Activated T-helper 2 cell treated with anti-CD3 and anti-CD28 coated beads, Interferon-gamma antibody, Interleukin-2, Interleukin-4, amounts not matched to agents 10 μg/mL and 5 μg/mL and 100 μg/mL, durations not matched to agents 14 hours and 24 hours and 36 hours (primary cell): ENCODE measurements at regions of chr17 and their contacts with region 1.

Region 1: GRCh38 chr17:15999439-16000350 is at the starts of genes TTC19 and ZSWIM7:
- DNase-seq: peak; percentile 92
- H3K4me3 Mint-ChIP-seq: peak within 1 kb of the TSS; percentile 94
- H3K27ac Mint-ChIP-seq: peak within 1 kb of the TSS; percentile 96
- H3K4me1 Mint-ChIP-seq: peaks cover 27% of the 10 kb centered on the region
- H3K27me3 Mint-ChIP-seq: no peaks in the 10 kb centered on the region
- total RNA-seq, gene TTC19: 32.7 and 35.3 TPM in 2 replicates
- total RNA-seq, gene ZSWIM7: 12.8 and 14.2 TPM in 2 replicates

Region 2: GRCh38 chr17:15883617-15884111 is 116.0 kb before region 1 on chr17:
- intact Hi-C with region 1: loop called (anchors 2 kb)
- DNase-seq: no peak
- H3K4me3 Mint-ChIP-seq: no peak overlapping the region
- H3K27ac Mint-ChIP-seq: no peak overlapping the region
- H3K4me1 Mint-ChIP-seq: peaks cover 29% of the 10 kb centered on the region
- H3K27me3 Mint-ChIP-seq: no peaks in the 10 kb centered on the region

Region 3: DNA sequence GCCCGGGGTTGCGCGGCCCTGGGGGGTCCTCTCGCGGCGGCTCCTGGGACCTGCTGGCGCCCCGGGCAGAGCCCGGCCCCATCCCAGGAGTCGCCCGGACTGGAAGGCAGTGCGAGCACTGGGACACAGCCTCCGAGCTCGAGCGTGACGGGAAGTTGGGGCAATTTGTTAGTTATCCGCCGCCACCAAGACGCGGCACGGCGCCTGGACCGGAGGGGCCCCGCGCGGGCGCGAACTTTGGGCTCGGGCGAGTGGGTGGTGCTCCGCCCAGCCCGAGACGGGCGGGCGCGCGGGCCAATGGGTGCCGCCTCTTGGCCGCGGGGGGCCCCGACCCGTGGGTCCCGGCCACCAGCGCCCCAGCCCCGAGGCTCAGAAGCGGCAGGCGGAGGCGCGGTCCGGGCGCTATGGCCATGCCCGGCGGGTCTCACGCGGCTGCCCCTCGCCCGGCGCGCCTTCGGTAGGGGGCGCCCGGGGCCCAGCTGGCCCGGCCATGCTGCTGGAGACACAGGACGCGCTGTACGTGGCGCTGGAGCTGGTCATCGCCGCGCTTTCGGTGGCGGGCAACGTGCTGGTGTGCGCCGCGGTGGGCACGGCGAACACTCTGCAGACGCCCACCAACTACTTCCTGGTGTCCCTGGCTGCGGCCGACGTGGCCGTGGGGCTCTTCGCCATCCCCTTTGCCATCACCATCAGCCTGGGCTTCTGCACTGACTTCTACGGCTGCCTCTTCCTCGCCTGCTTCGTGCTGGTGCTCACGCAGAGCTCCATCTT is 54.8 kb before region 1 on chr17 and contains the start of gene ADORA2B:
- intact Hi-C with region 1: loop called (anchors 1 kb)
- DNase-seq: peak; percentile 36
- H3K4me3 Mint-ChIP-seq: peak within 1 kb of the TSS; percentile 84
- H3K27ac Mint-ChIP-seq: peak within 1 kb of the TSS; percentile 70
- H3K4me1 Mint-ChIP-seq: peaks cover 21% of the 10 kb centered on the region
- H3K27me3 Mint-ChIP-seq: peaks cover 44% of the 10 kb centered on the region
- total RNA-seq, gene ADORA2B: 3.6 and 4.2 TPM in 2 replicates

Region 4: GRCh38 chr17:16873174-16874035 is 873.7 kb after region 1 on chr17:
- intact Hi-C with region 1: no loop called
- DNase-seq: no peak
- H3K4me3 Mint-ChIP-seq: no peak overlapping the region
- H3K27ac Mint-ChIP-seq: no peak overlapping the region
- H3K4me1 Mint-ChIP-seq: no peaks in the 10 kb centered on the region
- H3K27me3 Mint-ChIP-seq: no peaks in the 10 kb centered on the region